ENCODE measurements at regions of chr14 and their contacts with region 1.

Region 1: GRCh38 chr14:76710056-76711010 is 50.9 kb upstream of the VASH1 start:
- DNase-seq: no peak
- H3K4me3 ChIP-seq: no peak overlapping the region
- H3K27ac ChIP-seq: no peak overlapping the region
- H3K4me1 ChIP-seq: peaks cover 27% of the 10 kb centered on the region
- H3K27me3 ChIP-seq: no peaks in the 10 kb centered on the region
- CTCF ChIP-seq: peak; percentile 87

Region 2: DNA sequence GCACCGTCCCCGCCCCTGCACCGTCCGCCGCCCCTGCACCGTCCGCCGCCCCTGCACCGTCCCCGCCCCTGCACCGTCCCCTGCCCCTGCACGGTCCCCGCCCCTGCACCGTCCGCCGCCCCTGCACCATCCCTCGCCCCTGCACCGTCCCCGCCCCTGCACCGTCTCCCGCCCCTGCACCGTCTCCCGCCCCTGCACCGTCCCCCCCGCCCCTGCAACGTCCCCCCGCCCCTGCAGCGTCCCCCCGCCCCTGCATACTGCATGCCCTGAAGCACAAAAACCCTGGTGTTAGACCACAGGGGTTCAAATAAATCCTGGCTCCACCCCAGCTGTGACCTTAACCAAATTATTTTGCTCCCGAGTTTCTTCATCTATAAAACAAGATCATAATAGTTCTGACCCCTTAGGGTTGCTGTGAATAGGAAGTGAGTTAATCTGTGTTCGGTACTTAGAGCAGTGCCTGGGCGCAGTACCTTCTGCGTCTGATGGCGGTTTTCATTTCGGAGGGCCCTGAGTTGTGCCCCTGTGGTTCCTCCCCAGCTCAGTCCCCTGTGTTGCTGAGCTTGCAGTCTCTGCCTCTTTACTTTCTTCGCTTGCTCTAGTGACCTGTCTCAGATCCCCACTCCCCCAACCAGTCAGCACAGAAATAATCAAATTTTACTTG is 296.2 kb before region 1 on chr14:
- intact Hi-C with region 1: no loop called
- DNase-seq: no peak
- H3K4me3 ChIP-seq: no peak overlapping the region
- H3K27ac ChIP-seq: no peak overlapping the region
- H3K4me1 ChIP-seq: no peaks in the 10 kb centered on the region
- H3K27me3 ChIP-seq: peaks cover 51% of the 10 kb centered on the region
- CTCF ChIP-seq: no peak

Region 3: DNA sequence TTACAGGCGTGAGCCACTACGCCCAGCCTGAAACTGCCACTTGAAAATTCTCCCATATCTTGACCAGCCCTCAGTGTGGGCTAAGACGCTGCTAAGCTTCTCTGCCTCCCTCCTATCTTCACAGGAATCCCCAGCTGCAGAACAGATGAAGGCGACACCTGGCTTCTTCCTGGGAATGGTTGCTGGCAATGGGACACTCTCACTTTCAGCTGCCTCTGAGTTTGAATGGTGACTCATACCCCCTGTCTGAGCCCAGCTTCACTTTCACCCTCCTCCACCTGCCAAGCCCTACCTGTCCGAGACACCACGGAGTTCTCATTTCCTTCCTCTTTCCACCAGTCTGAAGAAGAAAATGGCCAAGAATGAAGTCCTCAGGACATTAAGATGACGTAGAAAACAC is 32.6 kb after region 1 on chr14:
- intact Hi-C with region 1: no loop called
- DNase-seq: no peak
- H3K4me3 ChIP-seq: no peak overlapping the region
- H3K27ac ChIP-seq: no peak overlapping the region
- H3K4me1 ChIP-seq: no peaks in the 10 kb centered on the region
- H3K27me3 ChIP-seq: no peaks in the 10 kb centered on the region
- CTCF ChIP-seq: no peak

Region 4: GRCh38 chr14:76767681-76768656 is 57.6 kb after region 1 on chr14:
- intact Hi-C with region 1: no loop called
- DNase-seq: peak; percentile 73
- H3K4me3 ChIP-seq: peak overlapping the region; percentile 39
- H3K27ac ChIP-seq: peak overlapping the region; percentile 81
- H3K4me1 ChIP-seq: peaks cover 78% of the 10 kb centered on the region
- H3K27me3 ChIP-seq: no peaks in the 10 kb centered on the region
- CTCF ChIP-seq: peak; percentile 34

Region 5: GRCh38 chr14:76784266-76785264 is 74.2 kb after region 1 on chr14:
- intact Hi-C with region 1: loop called (anchors 5 kb)
- DNase-seq: peak; percentile 84
- H3K4me3 ChIP-seq: no peak overlapping the region
- H3K27ac ChIP-seq: peak overlapping the region; percentile 70
- H3K4me1 ChIP-seq: peaks cover 64% of the 10 kb centered on the region
- H3K27me3 ChIP-seq: no peaks in the 10 kb centered on the region
- CTCF ChIP-seq: peak; percentile 95